MCF 10A (cell line): ENCODE measurements at regions of chr2 and their contacts with region 1.

Region 1: DNA sequence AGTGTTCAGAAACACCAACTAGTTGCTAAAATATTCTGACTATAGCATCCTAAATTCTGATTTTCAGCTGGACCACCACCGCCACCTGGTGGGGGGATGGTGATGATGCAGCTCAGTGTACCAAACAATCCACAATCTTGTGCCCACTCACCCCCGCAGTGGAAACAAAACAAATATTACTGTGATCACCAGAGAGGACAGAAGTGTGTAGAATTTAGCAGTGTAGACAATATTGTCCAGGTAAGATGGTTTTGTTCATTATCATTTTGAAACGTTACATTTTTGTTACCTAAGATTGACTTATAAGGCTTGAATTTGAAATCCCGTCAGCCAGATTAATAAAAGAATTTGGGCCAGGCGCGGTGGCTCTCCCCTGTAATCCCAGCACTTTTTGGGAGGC is 31.7 kb upstream of the UBXN4 start:
- DNase-seq: peak; percentile 62
- H3K4me3 Mint-ChIP-seq: no peak overlapping the region
- H3K27ac Mint-ChIP-seq: peak overlapping the region; percentile 3
- H3K4me1 Mint-ChIP-seq: no peaks in the 10 kb centered on the region
- H3K27me3 Mint-ChIP-seq: no peaks in the 10 kb centered on the region
- CTCF ChIP-seq: peak; percentile 86

Region 2: DNA sequence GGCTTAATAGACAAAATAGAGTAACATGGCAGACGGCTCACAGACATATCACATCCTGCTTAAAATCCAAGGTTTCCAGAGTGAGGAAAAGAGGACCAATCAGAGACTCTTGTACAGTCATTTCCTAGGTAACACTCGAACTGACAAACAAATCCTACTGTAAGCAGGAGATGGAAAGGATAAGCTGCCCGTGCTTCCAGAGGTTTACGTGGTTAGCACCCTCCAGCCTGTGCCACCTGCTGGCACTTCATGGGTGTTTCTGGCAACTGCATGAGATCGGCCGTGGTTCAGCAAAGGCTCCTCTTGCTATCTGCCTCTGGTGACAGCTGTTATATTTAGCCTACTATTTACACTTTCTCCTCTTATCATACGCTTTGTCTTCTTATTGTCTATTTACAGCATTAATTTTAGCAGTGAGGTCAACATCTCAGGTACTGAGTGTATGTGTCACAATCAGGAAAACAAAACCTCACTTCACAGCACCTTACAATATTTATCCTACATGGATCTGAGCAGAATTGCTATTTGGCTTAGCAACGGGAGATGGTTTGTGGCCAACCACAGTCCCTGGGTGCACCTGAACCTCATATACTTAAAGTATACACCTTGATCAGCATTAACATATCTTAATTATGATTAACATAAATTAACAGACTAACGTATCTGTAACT is 1218.1 kb before region 1 on chr2:
- CTCF ChIA-PET with region 1: no interaction called
- POLR2A ChIA-PET with region 1: no interaction called
- intact Hi-C with region 1: no loop called
- DNase-seq: peak; percentile 11
- H3K4me3 Mint-ChIP-seq: no peak overlapping the region
- H3K27ac Mint-ChIP-seq: no peak overlapping the region
- H3K4me1 Mint-ChIP-seq: no peaks in the 10 kb centered on the region
- H3K27me3 Mint-ChIP-seq: peaks cover 36% of the 10 kb centered on the region
- CTCF ChIP-seq: no peak

Region 3: DNA sequence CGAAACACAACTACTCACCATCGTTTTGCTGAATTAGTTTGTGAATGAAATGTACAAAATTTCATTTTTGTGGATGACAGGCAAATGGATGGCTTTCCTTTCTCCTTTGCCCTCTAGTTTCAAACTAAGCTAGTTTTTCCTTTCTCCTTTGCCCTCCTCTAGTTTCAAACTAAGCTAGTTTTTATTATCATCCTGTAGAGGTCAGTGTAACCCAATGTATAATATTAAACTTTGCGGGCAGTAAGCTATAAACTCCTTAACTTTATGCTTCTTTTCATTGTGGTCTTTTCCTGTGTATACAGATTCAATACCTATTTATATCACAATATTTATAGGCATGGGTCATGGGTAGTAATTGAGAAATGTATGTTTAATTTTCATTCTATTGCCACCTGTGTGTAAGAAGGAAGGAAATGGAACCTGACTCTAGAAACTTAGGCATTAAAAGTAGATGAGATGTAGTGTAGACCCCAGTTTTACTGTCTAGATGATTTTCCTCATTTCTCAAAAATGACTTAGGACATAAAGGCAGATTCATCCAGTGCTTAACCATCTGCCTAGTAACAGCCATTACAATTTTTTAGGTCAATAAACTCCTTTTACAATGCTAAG is 720.9 kb before region 1 on chr2:
- CTCF ChIA-PET with region 1: interaction called, 21 read pairs
- POLR2A ChIA-PET with region 1: interaction called, 3 read pairs
- intact Hi-C with region 1: no loop called
- DNase-seq: peak; percentile 46
- H3K4me3 Mint-ChIP-seq: no peak overlapping the region
- H3K27ac Mint-ChIP-seq: no peak overlapping the region
- H3K4me1 Mint-ChIP-seq: no peaks in the 10 kb centered on the region
- H3K27me3 Mint-ChIP-seq: peaks cover 50% of the 10 kb centered on the region
- CTCF ChIP-seq: peak; percentile 46

Region 4: GRCh38 chr2:135010200-135010942 is 699.6 kb before region 1 on chr2:
- CTCF ChIA-PET with region 1: interaction called, 106 read pairs
- POLR2A ChIA-PET with region 1: no interaction called
- intact Hi-C with region 1: no loop called
- DNase-seq: no peak
- H3K4me3 Mint-ChIP-seq: no peak overlapping the region
- H3K27ac Mint-ChIP-seq: no peak overlapping the region
- H3K4me1 Mint-ChIP-seq: no peaks in the 10 kb centered on the region
- H3K27me3 Mint-ChIP-seq: peaks cover 26% of the 10 kb centered on the region
- CTCF ChIP-seq: no peak

Region 5: DNA sequence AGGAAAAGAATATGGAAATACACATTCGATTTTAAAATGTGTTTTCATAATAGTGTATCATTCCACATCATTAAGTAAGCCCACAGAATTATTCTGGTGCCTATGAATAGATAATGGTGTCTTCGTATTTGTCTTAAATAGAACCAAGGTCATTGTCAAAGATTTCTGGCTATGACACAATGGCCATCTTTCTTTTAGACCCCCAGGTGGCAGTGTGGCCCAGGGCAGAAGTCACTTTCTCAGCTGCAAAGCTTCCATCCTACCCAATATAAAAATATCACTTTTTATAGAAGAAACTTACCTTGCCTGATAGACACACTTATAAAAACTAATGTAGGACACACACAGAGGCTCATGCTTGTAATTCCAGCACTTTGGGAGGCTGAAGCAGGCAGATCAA is 236.4 kb before region 1 on chr2:
- CTCF ChIA-PET with region 1: interaction called, 3 read pairs
- POLR2A ChIA-PET with region 1: no interaction called
- intact Hi-C with region 1: loop called (anchors 1 kb)
- DNase-seq: peak; percentile 40
- H3K4me3 Mint-ChIP-seq: no peak overlapping the region
- H3K27ac Mint-ChIP-seq: no peak overlapping the region
- H3K4me1 Mint-ChIP-seq: no peaks in the 10 kb centered on the region
- H3K27me3 Mint-ChIP-seq: no peaks in the 10 kb centered on the region
- CTCF ChIP-seq: peak; percentile 35

Region 6: GRCh38 chr2:135694711-135695110 is 15.3 kb before region 1 on chr2:
- CTCF ChIA-PET with region 1: interaction called, 10 read pairs
- POLR2A ChIA-PET with region 1: no interaction called
- intact Hi-C with region 1: no loop called
- DNase-seq: no peak
- H3K4me3 Mint-ChIP-seq: no peak overlapping the region
- H3K27ac Mint-ChIP-seq: peak overlapping the region; percentile 50
- H3K4me1 Mint-ChIP-seq: no peaks in the 10 kb centered on the region
- H3K27me3 Mint-ChIP-seq: no peaks in the 10 kb centered on the region
- CTCF ChIP-seq: no peak

Region 7: GRCh38 chr2:135863233-135863632 is 153.2 kb after region 1 on chr2:
- CTCF ChIA-PET with region 1: no interaction called
- POLR2A ChIA-PET with region 1: no interaction called
- intact Hi-C with region 1: no loop called
- DNase-seq: no peak
- H3K4me3 Mint-ChIP-seq: no peak overlapping the region
- H3K27ac Mint-ChIP-seq: no peak overlapping the region
- H3K4me1 Mint-ChIP-seq: no peaks in the 10 kb centered on the region
- H3K27me3 Mint-ChIP-seq: no peaks in the 10 kb centered on the region
- CTCF ChIP-seq: no peak

Region 8: DNA sequence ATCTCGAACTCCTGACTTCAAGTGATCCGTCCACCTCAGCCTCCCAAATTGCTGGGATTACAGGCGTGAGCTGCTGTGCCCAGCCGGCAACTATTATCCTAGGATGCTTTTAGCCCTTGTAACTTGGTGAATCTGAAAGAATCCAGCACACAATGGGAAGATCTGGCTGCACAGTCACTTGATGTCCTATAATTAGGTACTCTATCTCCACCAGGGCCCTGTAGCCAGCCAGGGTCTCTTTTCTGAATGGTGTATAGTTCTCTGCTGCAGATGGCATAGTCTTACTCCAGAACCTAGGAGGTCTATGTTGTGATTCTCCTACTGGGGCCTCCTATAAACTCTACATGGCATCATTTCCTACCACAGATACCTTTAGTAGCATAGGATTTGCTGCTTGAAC is 180.2 kb after region 1 on chr2:
- CTCF ChIA-PET with region 1: no interaction called
- POLR2A ChIA-PET with region 1: no interaction called
- intact Hi-C with region 1: no loop called
- DNase-seq: no peak
- H3K4me3 Mint-ChIP-seq: no peak overlapping the region
- H3K27ac Mint-ChIP-seq: no peak overlapping the region
- H3K4me1 Mint-ChIP-seq: no peaks in the 10 kb centered on the region
- H3K27me3 Mint-ChIP-seq: peaks cover 8% of the 10 kb centered on the region
- CTCF ChIP-seq: no peak